GM10248 (cell line): ENCODE measurements at regions of chrX and their contacts with region 1.

Region 1: GRCh38 chrX:31036895-31037294 is 34.9 kb downstream of the FTHL17 start:
- DNase-seq: peak; percentile 24
- CTCF ChIP-seq: peak; percentile 65

Region 2: GRCh38 chrX:31053621-31054020 is 16.7 kb after region 1 on chrX:
- CTCF ChIA-PET with region 1: interaction called, 19 read pairs
- POLR2A ChIA-PET with region 1: no interaction called
- DNase-seq: no peak
- CTCF ChIP-seq: no peak

Region 3: DNA sequence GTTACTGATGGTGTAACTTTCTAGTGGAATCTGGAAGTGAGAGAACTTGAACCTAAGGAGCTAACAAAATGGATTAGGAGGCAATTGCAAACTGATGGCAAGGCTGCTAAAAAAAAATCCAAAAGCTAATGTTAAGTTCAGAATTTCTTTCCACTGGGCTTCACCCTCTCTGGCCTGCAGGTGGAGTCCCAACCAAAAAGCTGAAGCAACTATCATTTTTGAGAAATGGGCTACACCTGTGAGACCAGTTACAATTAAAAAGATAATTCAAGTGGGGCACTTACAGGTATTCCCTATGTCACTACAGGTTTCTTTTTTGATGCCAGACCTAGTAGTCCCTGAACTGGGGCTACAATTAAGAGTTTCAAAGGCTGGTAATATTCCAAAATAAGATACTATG is 177.0 kb after region 1 on chrX:
- CTCF ChIA-PET with region 1: interaction called, 35 read pairs
- POLR2A ChIA-PET with region 1: no interaction called
- DNase-seq: peak; percentile 38
- CTCF ChIP-seq: peak; percentile 46

Region 4: DNA sequence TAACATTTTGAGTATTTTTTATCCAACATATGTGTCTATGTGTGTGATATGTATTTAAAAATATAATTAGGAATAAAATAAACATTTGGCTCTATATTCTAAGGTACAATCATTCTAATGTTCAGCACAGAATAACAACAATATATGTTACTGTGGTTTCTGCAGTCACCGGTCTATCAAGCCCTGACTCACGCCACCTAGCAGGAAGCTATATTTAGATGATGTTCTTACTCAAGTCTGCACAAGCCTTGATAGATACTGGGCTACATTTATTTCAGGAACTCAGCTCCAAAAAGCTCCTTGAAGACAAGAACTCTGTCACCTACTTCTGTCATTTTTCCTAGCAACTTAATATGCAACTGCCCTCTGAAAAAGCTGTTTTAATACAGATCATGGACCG is 186.9 kb after region 1 on chrX:
- CTCF ChIA-PET with region 1: interaction called, 14 read pairs
- POLR2A ChIA-PET with region 1: no interaction called
- DNase-seq: peak; percentile 19
- CTCF ChIP-seq: no peak

Region 5: GRCh38 chrX:31293409-31293808 is 256.5 kb after region 1 on chrX:
- CTCF ChIA-PET with region 1: interaction called, 155 read pairs
- POLR2A ChIA-PET with region 1: no interaction called
- DNase-seq: peak; percentile 12
- CTCF ChIP-seq: peak; percentile 37

Region 6: GRCh38 chrX:31658360-31658759 is 621.5 kb after region 1 on chrX:
- CTCF ChIA-PET with region 1: interaction called, 40 read pairs
- POLR2A ChIA-PET with region 1: no interaction called
- DNase-seq: peak; percentile 3
- CTCF ChIP-seq: peak; percentile 34